Activated CD4-positive, alpha-beta memory T cell treated with anti-CD3 and anti-CD28 coated beads for 36 hours (primary cell): ENCODE measurements at regions of chr11 and their contacts with region 1.

Region 1: DNA sequence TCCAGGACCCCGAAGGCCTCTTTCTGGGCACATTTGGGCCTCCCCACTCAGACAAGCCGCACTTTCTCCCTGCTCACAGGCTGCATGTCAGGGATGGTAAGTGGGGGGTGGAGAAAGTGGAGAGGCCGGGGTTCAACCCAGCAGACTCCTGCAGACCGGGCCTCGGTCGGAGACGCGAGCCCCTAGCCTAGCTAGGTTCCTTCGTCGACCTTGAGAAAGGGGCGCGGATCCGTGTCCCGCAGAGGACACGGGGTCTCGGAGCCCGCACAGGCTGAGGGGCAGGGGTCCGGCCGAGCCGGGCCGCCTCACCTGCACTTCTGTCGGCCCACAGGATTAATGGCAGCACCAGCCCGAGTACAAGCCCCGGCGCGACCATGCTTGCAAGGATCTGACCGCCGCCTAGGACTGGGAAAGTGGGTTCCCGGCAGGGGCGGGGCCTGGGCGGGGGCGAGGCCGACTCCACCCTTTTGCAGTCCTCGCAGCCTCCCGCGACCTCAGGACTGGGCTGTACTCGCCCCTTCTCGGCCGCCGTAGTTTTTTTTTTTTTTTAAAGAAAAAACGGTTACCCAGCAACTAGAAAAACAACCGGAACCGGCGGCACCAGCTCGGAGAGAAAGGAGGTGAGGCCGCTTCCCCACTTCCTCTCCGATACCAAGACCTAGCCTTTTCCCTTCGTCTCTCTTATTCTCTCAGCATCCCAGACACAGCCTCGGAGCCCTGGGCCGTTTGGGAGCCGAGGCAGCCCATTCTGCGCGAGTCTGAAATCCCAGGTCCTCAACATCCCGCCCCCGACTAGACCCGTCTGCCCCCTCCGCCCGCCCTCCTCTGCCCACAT is at the starts of genes SIAE and SPA17:
- DNase-seq: peak; percentile 94
- H3K4me3 Mint-ChIP-seq: peak within 1 kb of the TSS; percentile 87
- H3K27ac Mint-ChIP-seq: peak within 1 kb of the TSS; percentile 79
- H3K4me1 Mint-ChIP-seq: peaks cover 29% of the 10 kb centered on the region
- H3K27me3 Mint-ChIP-seq: no peaks in the 10 kb centered on the region
- total RNA-seq, gene SIAE: 11.8 to 12.1 TPM
- total RNA-seq, gene SPA17: 5.0 to 6.7 TPM

Region 2: GRCh38 chr11:124577716-124578427 is 95.7 kb before region 1 on chr11:
- CTCF ChIA-PET with region 1: no interaction called
- POLR2A ChIA-PET with region 1: no interaction called
- intact Hi-C with region 1: no loop called
- DNase-seq: no peak
- H3K4me3 Mint-ChIP-seq: no peak overlapping the region
- H3K27ac Mint-ChIP-seq: no peak overlapping the region
- H3K4me1 Mint-ChIP-seq: no peaks in the 10 kb centered on the region
- H3K27me3 Mint-ChIP-seq: peaks cover 2% of the 10 kb centered on the region

Region 3: GRCh38 chr11:124717786-124718651 is 44.5 kb after region 1 on chr11:
- CTCF ChIA-PET with region 1: interaction called, 10 read pairs
- POLR2A ChIA-PET with region 1: no interaction called
- intact Hi-C with region 1: no loop called
- DNase-seq: peak; percentile 33
- H3K4me3 Mint-ChIP-seq: peak overlapping the region; percentile 64
- H3K27ac Mint-ChIP-seq: no peak overlapping the region
- H3K4me1 Mint-ChIP-seq: peaks cover 20% of the 10 kb centered on the region
- H3K27me3 Mint-ChIP-seq: peaks cover 32% of the 10 kb centered on the region

Region 4: GRCh38 chr11:124753205-124753604 is 79.7 kb after region 1 on chr11:
- CTCF ChIA-PET with region 1: interaction called, 26 read pairs
- POLR2A ChIA-PET with region 1: no interaction called
- intact Hi-C with region 1: no loop called
- DNase-seq: no peak
- H3K4me3 Mint-ChIP-seq: no peak overlapping the region
- H3K27ac Mint-ChIP-seq: no peak overlapping the region
- H3K4me1 Mint-ChIP-seq: peaks cover 3% of the 10 kb centered on the region
- H3K27me3 Mint-ChIP-seq: peaks cover 19% of the 10 kb centered on the region

Region 5: GRCh38 chr11:124800226-124800929 is 126.8 kb after region 1 on chr11 and contains the start of gene MSANTD2:
- CTCF ChIA-PET with region 1: interaction called, 41 read pairs
- POLR2A ChIA-PET with region 1: interaction called, 9 read pairs
- intact Hi-C with region 1: loop called (anchors 1 kb)
- DNase-seq: peak; percentile 87
- H3K4me3 Mint-ChIP-seq: peak within 1 kb of the TSS; percentile 89
- H3K27ac Mint-ChIP-seq: peak within 1 kb of the TSS; percentile 94
- H3K4me1 Mint-ChIP-seq: peaks cover 29% of the 10 kb centered on the region
- H3K27me3 Mint-ChIP-seq: no peaks in the 10 kb centered on the region
- total RNA-seq, gene MSANTD2: 6.1 to 6.4 TPM

Region 6: GRCh38 chr11:124875943-124876817 is 202.6 kb after region 1 on chr11:
- CTCF ChIA-PET with region 1: interaction called, 14 read pairs
- POLR2A ChIA-PET with region 1: interaction called, 7 read pairs
- intact Hi-C with region 1: no loop called
- DNase-seq: peak; percentile 85
- H3K4me3 Mint-ChIP-seq: peak overlapping the region; percentile 77
- H3K27ac Mint-ChIP-seq: peak overlapping the region; percentile 61
- H3K4me1 Mint-ChIP-seq: peaks cover 13% of the 10 kb centered on the region
- H3K27me3 Mint-ChIP-seq: peaks cover 15% of the 10 kb centered on the region

Region 7: DNA sequence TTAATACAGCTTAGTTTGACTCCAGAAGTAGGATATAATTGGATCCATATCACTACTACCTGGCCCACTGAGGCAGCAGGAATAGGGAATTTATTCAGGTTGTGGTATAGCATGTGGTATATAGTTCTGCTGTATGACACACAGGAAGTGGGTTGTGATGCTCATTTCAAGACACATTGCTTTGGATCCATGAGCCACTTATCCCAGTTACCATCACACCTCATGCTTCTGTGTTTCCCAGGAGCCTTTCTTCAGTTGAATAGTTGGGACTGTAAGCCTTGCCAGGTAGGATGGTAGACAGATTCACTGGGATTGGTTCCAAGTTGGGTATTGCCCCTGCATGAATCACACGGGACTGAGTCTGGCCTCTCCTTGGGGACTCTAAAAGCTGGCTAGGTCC is 379.6 kb after region 1 on chr11:
- CTCF ChIA-PET with region 1: no interaction called
- POLR2A ChIA-PET with region 1: no interaction called
- intact Hi-C with region 1: no loop called
- DNase-seq: no peak
- H3K4me3 Mint-ChIP-seq: no peak overlapping the region
- H3K27ac Mint-ChIP-seq: no peak overlapping the region
- H3K4me1 Mint-ChIP-seq: no peaks in the 10 kb centered on the region
- H3K27me3 Mint-ChIP-seq: no peaks in the 10 kb centered on the region